HEK293 (cell line): ENCODE measurements at regions of chr7 and their contacts with region 1.

Region 1: GRCh38 chr7:39732837-39733804 is 109.7 kb downstream of the RALA start:
- H3K4me3 ChIP-seq: peak overlapping the region; percentile 58
- H3K27ac ChIP-seq: peak overlapping the region; percentile 83
- H3K4me1 ChIP-seq: peaks cover 11% of the 10 kb centered on the region
- CTCF ChIP-seq: no peak

Region 2: GRCh38 chr7:39566023-39566921 is 166.8 kb before region 1 on chr7 and contains the start of gene YAE1:
- CTCF ChIA-PET with region 1: no interaction called
- POLR2A ChIA-PET with region 1: no interaction called
- H3K4me3 ChIP-seq: peak within 1 kb of the TSS; percentile 100
- H3K27ac ChIP-seq: peak within 1 kb of the TSS; percentile 83
- H3K4me1 ChIP-seq: no peaks in the 10 kb centered on the region
- CTCF ChIP-seq: no peak

Region 3: DNA sequence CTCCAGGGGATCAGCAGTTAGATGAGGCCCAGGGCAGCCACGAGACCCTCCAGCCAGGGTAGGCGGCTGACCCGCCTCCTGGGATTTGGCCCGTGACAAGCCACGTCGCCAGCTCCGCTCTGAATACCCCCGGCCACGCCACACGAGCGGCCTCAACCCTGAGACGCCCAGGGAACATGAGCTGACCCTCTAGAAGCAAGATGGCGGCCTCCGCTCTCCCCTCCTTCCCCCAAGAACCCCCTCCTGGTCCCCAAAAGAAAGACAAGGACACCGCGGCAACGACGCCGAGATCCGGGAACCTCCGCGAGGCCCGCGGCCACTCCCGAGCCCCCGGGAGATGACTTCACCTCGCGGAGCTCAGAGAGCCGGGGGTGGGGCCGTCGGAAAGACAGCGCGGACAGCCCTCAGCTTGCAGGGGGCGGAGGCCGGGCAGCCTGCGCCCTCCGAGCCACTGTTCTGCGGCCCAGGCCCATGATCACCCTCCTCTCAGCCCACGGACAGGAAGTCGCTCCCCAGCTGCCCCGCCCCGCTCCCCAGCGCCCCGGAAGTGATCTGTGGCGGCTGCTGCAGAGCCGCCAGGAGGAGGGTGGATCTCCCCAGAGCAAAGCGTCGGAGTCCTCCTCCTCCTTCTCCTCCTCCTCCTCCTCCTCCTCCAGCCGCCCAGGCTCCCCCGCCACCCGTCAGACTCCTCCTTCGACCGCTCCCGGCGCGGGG is 109.9 kb before region 1 on chr7 and contains the start of gene RALA:
- CTCF ChIA-PET with region 1: no interaction called
- POLR2A ChIA-PET with region 1: interaction called, 14 read pairs
- H3K4me3 ChIP-seq: peak within 1 kb of the TSS; percentile 86
- H3K27ac ChIP-seq: peak within 1 kb of the TSS; percentile 78
- H3K4me1 ChIP-seq: peaks cover 21% of the 10 kb centered on the region
- CTCF ChIP-seq: no peak

Region 4: GRCh38 chr7:39709768-39710311 is 23.3 kb before region 1 on chr7:
- CTCF ChIA-PET with region 1: no interaction called
- POLR2A ChIA-PET with region 1: no interaction called
- H3K4me3 ChIP-seq: no peak overlapping the region
- H3K27ac ChIP-seq: no peak overlapping the region
- H3K4me1 ChIP-seq: no peaks in the 10 kb centered on the region
- CTCF ChIP-seq: no peak

Region 5: DNA sequence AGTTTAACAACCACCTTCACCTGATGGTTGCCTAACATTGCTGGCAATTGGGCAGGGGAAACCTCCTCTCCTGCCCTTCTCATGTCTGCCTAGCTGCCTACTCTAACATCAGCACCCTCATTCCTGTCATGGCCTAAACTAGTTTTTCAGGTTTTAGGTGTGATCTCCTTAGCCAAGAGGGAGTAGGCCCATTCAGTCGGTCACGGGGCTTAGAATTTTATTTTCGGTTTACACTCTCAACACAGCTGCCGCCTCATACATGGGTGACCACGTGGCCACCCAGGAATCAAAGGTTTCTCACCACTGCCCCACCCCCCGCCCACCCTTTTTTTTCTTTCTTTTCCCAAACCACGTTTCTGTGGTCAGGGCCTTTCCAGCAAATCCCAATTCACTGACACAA is 12.5 kb before region 1 on chr7:
- CTCF ChIA-PET with region 1: no interaction called
- POLR2A ChIA-PET with region 1: no interaction called
- H3K4me3 ChIP-seq: no peak overlapping the region
- H3K27ac ChIP-seq: no peak overlapping the region
- H3K4me1 ChIP-seq: no peaks in the 10 kb centered on the region
- CTCF ChIP-seq: no peak